CD4-positive, alpha-beta T cell (primary cell): ENCODE measurements at regions of chr17 and their contacts with region 1.

Region 1: DNA sequence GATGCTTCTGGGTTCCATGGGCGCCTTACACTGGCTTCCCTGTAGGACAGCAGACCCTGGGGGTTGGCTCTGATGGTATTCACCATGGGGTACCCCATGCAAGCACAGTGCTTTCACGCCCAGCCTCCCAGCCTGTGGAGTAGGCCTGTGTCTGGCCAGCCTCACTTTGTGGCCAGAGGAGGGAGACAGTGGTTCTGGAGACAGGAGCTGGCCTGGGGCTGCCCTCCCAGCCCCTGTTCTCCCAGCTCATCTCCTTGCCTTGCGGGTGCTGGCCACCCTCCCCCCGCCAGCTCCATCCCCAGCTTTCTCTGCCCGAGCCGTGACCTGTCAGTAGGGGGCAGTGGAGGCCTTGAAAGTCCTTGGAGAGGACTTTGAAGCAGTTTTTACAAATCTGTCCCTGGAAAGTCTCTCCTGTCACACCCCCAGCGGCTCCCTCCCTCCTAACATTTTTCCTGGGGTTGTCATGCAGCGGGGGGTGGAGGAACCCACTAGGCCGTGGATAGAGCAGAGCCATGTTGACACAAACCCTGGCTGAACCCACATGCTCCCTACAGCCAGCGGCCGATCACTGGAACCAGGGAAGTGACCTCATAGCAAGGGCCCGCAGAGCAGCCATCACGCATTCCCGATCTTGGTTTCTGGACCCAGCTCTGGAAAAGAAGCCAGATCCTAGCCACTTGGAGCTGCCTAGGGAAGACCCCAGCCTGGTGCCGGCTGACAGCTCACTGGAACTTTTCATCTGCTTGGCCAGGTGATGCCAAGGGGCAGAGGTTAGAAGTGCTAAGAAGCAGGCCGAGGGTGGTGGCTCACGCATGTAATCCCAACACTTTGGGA is 289.4 kb downstream of the SEC14L1 start:
- DNase-seq: peak; percentile 75 to 90 (median 84)
- ATAC-seq: peak; percentile 46
- H3K4me3 ChIP-seq: no peak overlapping the region
- H3K4me3 Mint-ChIP-seq: peak overlapping the region; percentile 62
- H3K27ac ChIP-seq: peak overlapping the region in 1 of 2 donors; percentile 29
- H3K27ac Mint-ChIP-seq: peak overlapping the region; percentile 93
- H3K4me1 ChIP-seq: peaks cover 100% of the 10 kb centered on the region
- H3K4me1 Mint-ChIP-seq: peaks cover 93% of the 10 kb centered on the region
- H3K27me3 ChIP-seq: no peaks in the 10 kb centered on the region
- H3K27me3 Mint-ChIP-seq: no peaks in the 10 kb centered on the region
- CTCF ChIP-seq: peak; percentile 77

Region 2: DNA sequence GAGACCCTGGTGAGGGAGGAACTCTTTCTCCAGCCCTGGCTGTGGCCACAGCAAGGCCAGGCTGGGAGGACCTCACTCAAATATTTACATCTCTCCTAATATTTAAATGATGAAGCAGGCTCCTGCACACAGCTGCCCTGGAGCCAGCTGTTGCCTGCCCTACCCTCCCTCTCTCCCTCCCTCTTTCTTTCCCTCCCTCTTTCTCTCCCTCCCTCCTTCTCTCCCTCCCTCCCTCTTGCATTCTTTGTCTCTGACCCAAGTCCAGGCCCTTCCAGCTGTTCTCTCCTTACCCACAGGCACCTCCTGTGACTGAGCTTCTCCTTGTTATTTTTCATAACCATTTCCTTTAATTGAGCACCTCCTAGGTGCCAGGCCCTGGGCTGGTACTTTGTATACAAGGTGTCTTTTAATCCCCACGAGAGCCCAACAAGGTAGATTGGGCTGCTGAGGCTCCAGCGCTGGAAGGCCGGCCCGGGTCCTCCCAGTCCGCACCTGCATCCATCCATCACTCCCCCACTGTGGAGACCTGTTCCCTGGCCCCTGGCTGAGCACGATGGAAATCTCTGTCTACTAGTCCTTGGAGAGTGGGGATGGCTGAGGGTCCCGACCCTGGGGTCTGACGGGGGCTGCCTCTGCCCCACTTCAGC is 47.0 kb before region 1 on chr17:
- CTCF ChIA-PET with region 1: no interaction called
- POLR2A ChIA-PET with region 1: interaction called, 58 read pairs
- intact Hi-C with region 1: no loop called
- DNase-seq: no peak
- ATAC-seq: peak; percentile 9
- H3K4me3 ChIP-seq: peak overlapping the region; percentile 41
- H3K4me3 Mint-ChIP-seq: peak overlapping the region; percentile 50
- H3K27ac ChIP-seq: peak overlapping the region in 1 of 2 donors; percentile 32
- H3K27ac Mint-ChIP-seq: peak overlapping the region; percentile 93
- H3K4me1 ChIP-seq: peaks cover 100% of the 10 kb centered on the region
- H3K4me1 Mint-ChIP-seq: peaks cover 93% of the 10 kb centered on the region
- H3K27me3 ChIP-seq: no peaks in the 10 kb centered on the region
- H3K27me3 Mint-ChIP-seq: no peaks in the 10 kb centered on the region
- CTCF ChIP-seq: no peak

Region 3: GRCh38 chr17:77456951-77457548 is 26.9 kb after region 1 on chr17:
- CTCF ChIA-PET with region 1: interaction called, 7 read pairs
- POLR2A ChIA-PET with region 1: interaction called, 681 read pairs
- intact Hi-C with region 1: loop called in 1 of 2 experiments (anchors 1 kb)
- DNase-seq: peak in 4 of 14 experiments; percentile 47 to 68 (median 60)
- ATAC-seq: peak; percentile 7
- H3K4me3 ChIP-seq: peak overlapping the region; percentile 94
- H3K4me3 Mint-ChIP-seq: peak overlapping the region; percentile 98
- H3K27ac ChIP-seq: peak overlapping the region; percentile 83 to 90
- H3K27ac Mint-ChIP-seq: peak overlapping the region; percentile 93
- H3K4me1 ChIP-seq: peaks cover 93% of the 10 kb centered on the region
- H3K4me1 Mint-ChIP-seq: peaks cover 72% of the 10 kb centered on the region
- H3K27me3 ChIP-seq: no peaks in the 10 kb centered on the region
- H3K27me3 Mint-ChIP-seq: no peaks in the 10 kb centered on the region
- CTCF ChIP-seq: no peak

Region 4: GRCh38 chr17:77471984-77472461 is 41.9 kb after region 1 on chr17:
- CTCF ChIA-PET with region 1: interaction called, 9 read pairs
- POLR2A ChIA-PET with region 1: interaction called, 681 read pairs
- intact Hi-C with region 1: loop called (anchors 2 kb)
- DNase-seq: no peak
- ATAC-seq: no peak
- H3K4me3 ChIP-seq: peak overlapping the region; percentile 25
- H3K4me3 Mint-ChIP-seq: peak overlapping the region; percentile 79
- H3K27ac ChIP-seq: peak overlapping the region; percentile 40 to 62
- H3K27ac Mint-ChIP-seq: peak overlapping the region; percentile 97
- H3K4me1 ChIP-seq: peaks cover 99% of the 10 kb centered on the region
- H3K4me1 Mint-ChIP-seq: peaks cover 96% of the 10 kb centered on the region
- H3K27me3 ChIP-seq: no peaks in the 10 kb centered on the region
- H3K27me3 Mint-ChIP-seq: no peaks in the 10 kb centered on the region
- CTCF ChIP-seq: no peak

Region 5: GRCh38 chr17:77494664-77495435 is 64.7 kb after region 1 on chr17:
- CTCF ChIA-PET with region 1: interaction called, 60 read pairs
- POLR2A ChIA-PET with region 1: interaction called, 16 read pairs
- intact Hi-C with region 1: loop called (anchors 1 kb)
- DNase-seq: peak; percentile 55 to 89 (median 71)
- ATAC-seq: peak; percentile 79
- H3K4me3 ChIP-seq: no peak overlapping the region
- H3K4me3 Mint-ChIP-seq: no peak overlapping the region
- H3K27ac ChIP-seq: peak overlapping the region; percentile 3 to 40
- H3K27ac Mint-ChIP-seq: peak overlapping the region; percentile 71
- H3K4me1 ChIP-seq: peaks cover 57% of the 10 kb centered on the region
- H3K4me1 Mint-ChIP-seq: peaks cover 7% of the 10 kb centered on the region
- H3K27me3 ChIP-seq: no peaks in the 10 kb centered on the region
- H3K27me3 Mint-ChIP-seq: no peaks in the 10 kb centered on the region
- CTCF ChIP-seq: peak; percentile 99